ENCODE measurements at regions of chr3 and their contacts with region 1.

Region 1: DNA sequence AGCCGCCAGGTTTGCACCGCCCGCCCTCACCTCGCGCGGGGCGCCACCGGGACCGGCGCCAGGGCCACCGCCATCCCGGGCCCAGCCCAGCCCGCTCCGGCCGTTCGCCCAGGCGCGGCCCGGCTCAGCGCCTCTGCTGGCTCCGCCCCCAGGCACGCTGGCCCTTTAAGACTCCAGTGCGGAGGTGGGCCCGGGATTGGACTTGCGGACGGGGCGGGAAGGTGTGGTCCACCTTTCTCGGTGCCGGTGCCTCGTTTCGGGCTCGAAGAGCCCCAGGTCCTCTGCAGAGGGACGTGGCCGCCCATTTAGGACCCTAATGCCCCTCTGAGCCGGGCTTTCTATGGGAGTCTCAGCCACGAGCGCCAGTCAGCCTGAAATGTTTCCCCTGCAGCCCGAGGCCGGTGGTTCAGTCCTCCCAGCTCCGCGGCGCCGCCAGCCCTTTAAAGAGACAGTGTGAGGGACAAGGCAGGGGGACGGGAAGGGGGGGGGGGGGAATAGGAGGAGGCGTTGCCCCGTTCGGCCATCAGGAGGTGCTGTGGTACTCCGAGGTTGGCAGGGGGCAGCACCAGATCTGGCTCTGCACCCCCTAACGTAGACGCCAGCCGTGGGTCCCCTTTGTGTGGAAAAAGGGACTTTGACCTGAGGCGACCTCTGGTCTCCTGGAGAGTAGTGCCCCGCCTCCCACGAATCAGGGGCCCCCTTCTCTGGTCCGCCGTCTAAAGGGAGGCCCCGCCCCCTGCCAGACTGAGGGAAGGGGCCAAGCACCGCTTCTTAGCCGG is 1.0 kb downstream of the HYAL2 start:
- DNase-seq: peak; percentile 89
- ATAC-seq: peak; percentile 66
- H3K4me3 ChIP-seq: peak overlapping the region; percentile 97
- H3K27ac ChIP-seq: peak overlapping the region; percentile 86
- H3K4me1 ChIP-seq: peaks cover 41% of the 10 kb centered on the region
- H3K27me3 ChIP-seq: no peaks in the 10 kb centered on the region
- CTCF ChIP-seq: peak; percentile 70

Region 2: DNA sequence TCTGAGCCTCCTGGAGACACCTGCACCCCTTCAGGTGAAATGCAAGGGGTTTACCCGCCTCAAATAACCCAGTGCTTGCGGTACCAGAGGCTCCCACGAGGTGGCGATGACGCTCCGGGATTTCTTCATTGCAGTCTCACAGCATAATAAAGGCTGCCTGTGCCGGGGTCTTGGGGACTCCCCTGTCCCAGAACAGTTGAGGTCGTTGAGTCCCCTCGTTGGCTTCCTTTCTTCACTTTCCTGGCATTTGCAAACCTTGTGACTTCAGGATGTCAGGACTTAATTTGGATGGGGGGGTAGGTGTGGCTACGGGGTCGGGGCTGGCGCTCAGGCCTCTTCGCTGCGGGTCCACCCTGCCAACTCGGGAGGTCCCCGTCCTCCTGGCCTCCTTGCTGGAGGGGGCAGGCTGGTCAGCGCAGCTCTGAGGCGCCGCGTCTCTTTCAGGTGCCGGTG is 128.8 kb before region 1 on chr3:
- CTCF ChIA-PET with region 1: no interaction called
- POLR2A ChIA-PET with region 1: no interaction called
- intact Hi-C with region 1: loop called (anchors 5 kb)
- DNase-seq: peak; percentile 85
- ATAC-seq: peak; percentile 20
- H3K4me3 ChIP-seq: no peak overlapping the region
- H3K27ac ChIP-seq: no peak overlapping the region
- H3K4me1 ChIP-seq: no peaks in the 10 kb centered on the region; the same call in 1 of the 2 replicates
- H3K27me3 ChIP-seq: no peaks in the 10 kb centered on the region
- CTCF ChIP-seq: peak; percentile 96

Region 3: GRCh38 chr3:50272911-50273693 is 48.4 kb before region 1 on chr3:
- CTCF ChIA-PET with region 1: no interaction called
- POLR2A ChIA-PET with region 1: no interaction called
- intact Hi-C with region 1: loop called (anchors 1 kb)
- DNase-seq: peak; percentile 92
- ATAC-seq: peak; percentile 42
- H3K4me3 ChIP-seq: peak overlapping the region; percentile 59
- H3K27ac ChIP-seq: no peak overlapping the region
- H3K4me1 ChIP-seq: peaks cover 38% of the 10 kb centered on the region
- H3K27me3 ChIP-seq: no peaks in the 10 kb centered on the region
- CTCF ChIP-seq: peak; percentile 96

Region 4: GRCh38 chr3:50298836-50299637 is 22.5 kb before region 1 on chr3 and contains the starts of genes HYAL3 and NAA80:
- CTCF ChIA-PET with region 1: interaction called, 8 read pairs
- POLR2A ChIA-PET with region 1: interaction called, 4 read pairs
- intact Hi-C with region 1: loop called (anchors 1 kb)
- DNase-seq: peak; percentile 99
- ATAC-seq: peak; percentile 86
- H3K4me3 ChIP-seq: peak within 1 kb of the TSS; percentile 94
- H3K27ac ChIP-seq: peak within 1 kb of the TSS; percentile 90
- H3K4me1 ChIP-seq: peaks cover 20% of the 10 kb centered on the region
- H3K27me3 ChIP-seq: no peaks in the 10 kb centered on the region
- CTCF ChIP-seq: peak; percentile 36; the same call in 1 of the 2 replicates
- total RNA-seq, gene HYAL3: 13.2 and 20.8 TPM in 2 replicates
- total RNA-seq, gene NAA80: 8.7 and 16.6 TPM in 2 replicates

Region 5: GRCh38 chr3:50337191-50337841 is 15.8 kb after region 1 on chr3:
- CTCF ChIA-PET with region 1: interaction called, 10 read pairs
- POLR2A ChIA-PET with region 1: interaction called, 5 read pairs
- intact Hi-C with region 1: no loop called
- DNase-seq: peak; percentile 99
- ATAC-seq: peak; percentile 88
- H3K4me3 ChIP-seq: peak overlapping the region; percentile 89
- H3K27ac ChIP-seq: peak overlapping the region; percentile 72
- H3K4me1 ChIP-seq: peaks cover 32% of the 10 kb centered on the region
- H3K27me3 ChIP-seq: no peaks in the 10 kb centered on the region
- CTCF ChIP-seq: no peak

Region 6: GRCh38 chr3:50370594-50370993 is 49.1 kb after region 1 on chr3:
- CTCF ChIA-PET with region 1: no interaction called
- POLR2A ChIA-PET with region 1: no interaction called
- intact Hi-C with region 1: no loop called
- DNase-seq: peak; percentile 55
- ATAC-seq: peak; percentile 54
- H3K4me3 ChIP-seq: no peak overlapping the region
- H3K27ac ChIP-seq: no peak overlapping the region
- H3K4me1 ChIP-seq: no peaks in the 10 kb centered on the region
- H3K27me3 ChIP-seq: no peaks in the 10 kb centered on the region
- CTCF ChIP-seq: peak; percentile 58

Measured in PC-3 (cell line).